ENCODE measurements at regions of chr16 and their contacts with region 1.

Region 1: GRCh38 chr16:55465077-55465896 is 13.7 kb upstream of the MMP2 start:
- DNase-seq: peak; percentile 79
- ATAC-seq: peak; percentile 97
- H3K4me3 ChIP-seq: no peak overlapping the region
- H3K27ac ChIP-seq: no peak overlapping the region
- H3K4me1 ChIP-seq: peaks cover under 1% of the 10 kb centered on the region; the same call in 1 of the 2 replicates
- H3K27me3 ChIP-seq: peaks cover 10% of the 10 kb centered on the region
- CTCF ChIP-seq: peak; percentile 100
- POLR2A ChIP-seq: peak; percentile 80
- RAD21 ChIP-seq: peak; percentile 100

Region 2: DNA sequence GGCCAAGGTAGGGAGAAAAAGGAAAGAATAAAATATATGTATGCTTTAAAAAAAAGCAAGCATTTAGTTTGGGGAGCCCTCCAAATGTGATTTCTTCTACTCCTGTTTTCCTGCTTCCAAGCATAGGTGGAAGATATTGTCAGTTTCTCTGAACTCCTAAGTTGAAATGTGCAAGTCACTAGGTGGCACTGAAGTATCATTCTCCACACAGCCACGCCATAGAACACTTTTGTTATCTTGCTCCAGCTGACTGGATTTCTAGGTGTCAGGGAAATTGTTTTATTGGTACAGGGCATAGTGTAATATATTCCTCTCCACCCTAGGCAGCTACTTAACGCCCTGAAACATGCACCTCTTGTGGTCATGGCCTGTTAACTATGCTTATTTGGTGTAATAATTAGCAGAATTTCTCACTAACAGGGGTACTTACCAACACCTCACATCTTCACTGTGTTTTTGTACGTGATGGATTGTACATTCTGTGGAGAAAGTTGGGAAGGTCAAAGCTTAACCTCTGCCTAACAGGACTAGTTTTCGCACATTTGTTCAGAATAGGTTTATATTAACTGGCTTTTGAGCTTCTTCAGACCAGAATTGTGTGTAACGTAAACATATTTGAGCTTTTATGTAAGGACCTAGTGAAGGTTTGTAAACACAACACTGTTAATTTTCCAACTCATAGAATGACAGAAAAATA is 1692.0 kb before region 1 on chr16:
- CTCF ChIA-PET with region 1: no interaction called
- POLR2A ChIA-PET with region 1: no interaction called
- dilution Hi-C with region 1: no loop called
- in situ Hi-C with region 1: no loop called
- intact Hi-C with region 1: loop called (anchors 5 kb)
- DNase-seq: peak; percentile 79
- ATAC-seq: peak; percentile 46
- H3K4me3 ChIP-seq: no peak overlapping the region
- H3K27ac ChIP-seq: no peak overlapping the region
- H3K4me1 ChIP-seq: peaks cover 22% of the 10 kb centered on the region
- H3K27me3 ChIP-seq: no peaks in the 10 kb centered on the region
- CTCF ChIP-seq: peak; percentile 86
- POLR2A ChIP-seq: no peak
- RAD21 ChIP-seq: peak; percentile 92

Region 3: DNA sequence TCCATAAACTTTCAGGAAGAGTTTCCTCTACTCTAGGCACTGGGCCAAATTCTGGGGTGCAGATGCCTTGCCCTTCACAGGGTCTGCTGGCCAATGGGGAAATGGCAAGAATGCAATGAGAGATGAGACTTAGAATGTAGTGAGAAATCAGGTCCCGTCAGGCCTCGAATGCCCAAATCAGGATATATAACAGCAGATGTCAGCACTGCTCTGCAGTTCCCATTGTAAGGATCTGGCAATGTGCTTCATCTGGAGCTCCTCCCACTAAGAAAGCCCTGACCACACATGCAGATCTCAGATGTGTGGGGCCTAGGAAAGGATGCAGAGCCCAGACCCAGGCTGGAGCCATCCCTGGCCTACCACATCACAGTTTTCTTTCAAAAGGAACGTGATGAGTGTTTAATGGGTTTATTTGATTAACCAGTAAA is 29.7 kb after region 1 on chr16:
- CTCF ChIA-PET with region 1: interaction called, 11 read pairs
- POLR2A ChIA-PET with region 1: interaction called, 8 read pairs
- dilution Hi-C with region 1: no loop called
- in situ Hi-C with region 1: no loop called
- intact Hi-C with region 1: loop called (anchors 2 kb)
- DNase-seq: peak; percentile 96
- ATAC-seq: peak; percentile 74
- H3K4me3 ChIP-seq: no peak overlapping the region
- H3K27ac ChIP-seq: no peak overlapping the region
- H3K4me1 ChIP-seq: peaks cover 13% of the 10 kb centered on the region
- H3K27me3 ChIP-seq: no peaks in the 10 kb centered on the region
- CTCF ChIP-seq: peak; percentile 63
- POLR2A ChIP-seq: no peak
- RAD21 ChIP-seq: peak; percentile 85

Region 4: GRCh38 chr16:55643161-55643970 is 178.1 kb after region 1 on chr16:
- CTCF ChIA-PET with region 1: interaction called, 4 read pairs
- POLR2A ChIA-PET with region 1: no interaction called
- dilution Hi-C with region 1: no loop called
- in situ Hi-C with region 1: loop called (anchors 10 kb)
- intact Hi-C with region 1: loop called (anchors 2 kb)
- DNase-seq: peak; percentile 12
- ATAC-seq: peak; percentile 34; the same call in 1 of the 2 replicates
- H3K4me3 ChIP-seq: no peak overlapping the region
- H3K27ac ChIP-seq: no peak overlapping the region
- H3K4me1 ChIP-seq: peaks cover 4% of the 10 kb centered on the region
- H3K27me3 ChIP-seq: peaks cover 65% of the 10 kb centered on the region
- CTCF ChIP-seq: peak; percentile 20; the same call in 1 of the 2 replicates
- POLR2A ChIP-seq: no peak
- RAD21 ChIP-seq: peak; percentile 24

Region 5: GRCh38 chr16:55711959-55712876 is 246.9 kb after region 1 on chr16:
- CTCF ChIA-PET with region 1: interaction called, 20 read pairs
- POLR2A ChIA-PET with region 1: no interaction called
- dilution Hi-C with region 1: no loop called
- in situ Hi-C with region 1: no loop called
- intact Hi-C with region 1: no loop called
- DNase-seq: peak; percentile 45
- ATAC-seq: peak; percentile 76
- H3K4me3 ChIP-seq: no peak overlapping the region
- H3K27ac ChIP-seq: no peak overlapping the region
- H3K4me1 ChIP-seq: no peaks in the 10 kb centered on the region
- H3K27me3 ChIP-seq: peaks cover 3% of the 10 kb centered on the region
- CTCF ChIP-seq: peak; percentile 58
- POLR2A ChIP-seq: no peak
- RAD21 ChIP-seq: peak; percentile 54

Measured in IMR-90 (cell line).